ENCODE measurements at regions of chr18 and their contacts with region 1.

Region 1: GRCh38 chr18:53894675-53895442 is 329.6 kb downstream of the MBD2 start:
- DNase-seq: no peak
- CTCF ChIP-seq: no peak

Region 2: DNA sequence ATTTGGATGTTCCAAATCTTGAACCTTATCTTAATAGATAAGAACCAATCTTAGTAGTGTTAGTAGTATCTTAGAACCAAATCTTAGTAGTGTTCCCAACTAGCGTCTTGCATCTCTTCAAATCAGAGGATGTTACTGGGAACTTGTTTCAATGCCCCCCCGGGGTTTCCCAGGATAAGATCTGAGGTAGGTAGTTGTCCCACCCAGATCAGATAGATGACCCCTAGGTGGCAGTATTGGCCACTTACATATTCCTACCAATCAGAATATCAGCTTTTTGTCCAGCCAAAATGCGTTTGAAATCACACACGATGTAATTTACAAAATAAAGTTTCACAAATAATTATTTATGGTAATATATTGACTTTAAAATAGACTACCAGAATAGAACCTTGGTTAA is 14.8 kb after region 1 on chr18:
- CTCF ChIA-PET with region 1: interaction called, 10 read pairs
- POLR2A ChIA-PET with region 1: no interaction called
- DNase-seq: no peak
- CTCF ChIP-seq: peak; percentile 28

Region 3: GRCh38 chr18:54119524-54120019 is 224.7 kb after region 1 on chr18:
- CTCF ChIA-PET with region 1: no interaction called
- POLR2A ChIA-PET with region 1: no interaction called
- DNase-seq: peak; percentile 28
- CTCF ChIP-seq: peak; percentile 76